Right ventricle myocardium superior (tissue), 1 donor: ENCODE measurements at regions of chr6 and their contacts with region 1.

Region 1: DNA sequence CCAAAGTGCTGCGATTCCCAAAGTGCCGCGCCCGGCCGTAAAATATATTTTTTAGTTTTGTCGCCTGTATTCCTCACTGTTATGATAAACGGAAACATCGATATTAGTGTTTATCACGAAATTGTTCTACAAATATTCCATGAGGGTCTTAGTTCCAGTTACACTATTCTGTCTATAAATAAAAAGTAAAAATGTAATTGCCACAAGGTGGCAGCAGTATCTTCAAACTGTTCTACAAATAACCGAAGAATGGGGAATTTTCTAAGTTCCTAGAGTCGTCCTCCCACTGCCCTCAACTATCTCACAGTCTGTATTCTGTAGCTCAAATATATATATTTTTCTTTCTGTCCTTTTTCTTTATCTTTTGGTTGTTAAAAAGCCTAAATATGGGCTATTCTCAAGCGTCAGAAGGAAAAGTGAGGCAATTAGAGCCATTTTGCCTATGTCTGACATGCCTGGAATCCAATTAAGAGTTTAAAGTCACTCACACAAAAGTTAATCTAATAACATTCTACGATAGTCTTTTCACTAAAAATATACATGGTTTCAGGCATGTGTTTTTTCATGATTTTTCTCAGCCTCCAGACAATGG is 14.2 kb upstream of the FAM162B start:
- DNase-seq: no peak
- ATAC-seq: peak; percentile 57

Region 2: DNA sequence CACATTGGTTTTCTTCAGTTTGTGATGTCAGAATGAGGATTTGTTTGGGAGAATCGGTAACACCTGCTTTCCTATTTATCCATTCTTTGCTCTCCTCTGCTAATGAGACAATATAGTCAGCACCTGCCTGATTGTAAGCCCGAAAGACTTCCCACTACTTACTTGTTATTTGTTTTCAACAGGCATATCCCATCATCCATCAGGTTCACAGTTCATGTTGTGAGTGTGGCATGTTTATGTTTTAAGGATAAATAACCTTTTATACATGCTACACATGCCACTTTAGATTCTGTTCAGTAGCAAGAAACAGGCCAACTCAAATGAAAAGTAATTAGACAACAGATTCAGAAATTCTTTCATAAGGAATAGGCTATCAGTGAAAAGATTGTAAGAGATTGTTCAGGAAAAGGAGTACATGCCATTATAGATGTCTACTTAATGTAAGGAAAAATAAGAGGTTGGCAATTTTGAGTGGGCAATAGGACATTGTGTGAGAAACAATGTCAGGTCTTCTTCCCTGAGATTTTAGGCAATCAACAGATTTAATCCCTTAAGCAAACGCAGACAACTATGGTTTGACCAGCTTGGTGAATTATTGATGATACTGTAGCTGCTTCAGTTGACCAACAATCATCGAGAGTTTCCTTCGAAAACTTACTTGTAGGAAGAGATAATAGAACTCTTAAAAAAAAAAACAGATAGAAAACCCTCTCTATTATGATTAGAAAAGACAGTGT is 57.1 kb after region 1 on chr6:
- intact Hi-C with region 1: loop called (anchors 10 kb)
- DNase-seq: no peak
- ATAC-seq: no peak